Activated B cell treated with CpG ODN at 0.5 μM for 24 hours (primary cell): ENCODE measurements at regions of chr15 and their contacts with region 1.

Region 1: DNA sequence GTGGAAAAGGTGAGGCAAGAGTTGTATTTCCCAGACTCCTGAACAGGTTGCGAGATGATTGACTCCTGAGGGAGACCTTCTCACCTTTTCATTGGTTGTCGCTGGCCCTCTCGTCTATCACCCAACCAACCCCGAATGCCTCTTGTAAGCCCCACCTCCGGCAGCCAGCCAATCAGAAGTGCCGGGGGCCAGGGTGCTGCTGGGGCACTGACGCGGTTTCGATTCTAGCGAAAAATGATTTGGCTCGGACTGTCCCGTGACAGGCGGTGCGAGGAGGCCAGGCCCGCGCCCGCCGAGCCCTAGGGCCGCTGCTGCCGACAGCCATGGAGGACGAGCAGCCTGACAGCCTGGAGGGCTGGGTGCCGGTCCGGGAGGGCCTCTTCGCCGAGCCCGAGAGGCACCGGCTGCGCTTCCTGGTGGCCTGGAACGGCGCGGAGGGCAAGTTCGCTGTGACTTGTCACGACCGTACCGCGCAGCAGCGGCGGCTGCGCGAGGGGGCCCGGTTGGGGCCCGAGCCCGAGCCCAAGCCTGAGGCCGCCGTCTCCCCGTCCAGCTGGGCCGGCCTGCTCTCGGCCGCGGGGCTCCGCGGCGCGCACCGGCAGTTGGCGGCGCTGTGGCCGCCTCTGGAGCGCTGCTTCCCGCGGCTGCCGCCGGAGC is at the start of gene WHAMM:
- DNase-seq: peak; percentile 91
- ATAC-seq: peak; percentile 87
- H3K4me3 Mint-ChIP-seq: peak within 1 kb of the TSS; percentile 91
- H3K27ac Mint-ChIP-seq: peak within 1 kb of the TSS; percentile 93
- H3K4me1 Mint-ChIP-seq: peaks cover 71% of the 10 kb centered on the region
- H3K27me3 Mint-ChIP-seq: no peaks in the 10 kb centered on the region
- CTCF ChIP-seq: no peak
- total RNA-seq, gene WHAMM: 17.7 and 18.7 TPM in 2 replicates

Region 2: GRCh38 chr15:81216422-81216821 is 1593.1 kb before region 1 on chr15:
- CTCF ChIA-PET with region 1: no interaction called
- POLR2A ChIA-PET with region 1: no interaction called
- intact Hi-C with region 1: no loop called
- DNase-seq: no peak
- ATAC-seq: no peak
- H3K4me3 Mint-ChIP-seq: no peak overlapping the region
- H3K27ac Mint-ChIP-seq: no peak overlapping the region
- H3K4me1 Mint-ChIP-seq: no peaks in the 10 kb centered on the region
- H3K27me3 Mint-ChIP-seq: peaks cover 25% of the 10 kb centered on the region
- CTCF ChIP-seq: no peak

Region 3: DNA sequence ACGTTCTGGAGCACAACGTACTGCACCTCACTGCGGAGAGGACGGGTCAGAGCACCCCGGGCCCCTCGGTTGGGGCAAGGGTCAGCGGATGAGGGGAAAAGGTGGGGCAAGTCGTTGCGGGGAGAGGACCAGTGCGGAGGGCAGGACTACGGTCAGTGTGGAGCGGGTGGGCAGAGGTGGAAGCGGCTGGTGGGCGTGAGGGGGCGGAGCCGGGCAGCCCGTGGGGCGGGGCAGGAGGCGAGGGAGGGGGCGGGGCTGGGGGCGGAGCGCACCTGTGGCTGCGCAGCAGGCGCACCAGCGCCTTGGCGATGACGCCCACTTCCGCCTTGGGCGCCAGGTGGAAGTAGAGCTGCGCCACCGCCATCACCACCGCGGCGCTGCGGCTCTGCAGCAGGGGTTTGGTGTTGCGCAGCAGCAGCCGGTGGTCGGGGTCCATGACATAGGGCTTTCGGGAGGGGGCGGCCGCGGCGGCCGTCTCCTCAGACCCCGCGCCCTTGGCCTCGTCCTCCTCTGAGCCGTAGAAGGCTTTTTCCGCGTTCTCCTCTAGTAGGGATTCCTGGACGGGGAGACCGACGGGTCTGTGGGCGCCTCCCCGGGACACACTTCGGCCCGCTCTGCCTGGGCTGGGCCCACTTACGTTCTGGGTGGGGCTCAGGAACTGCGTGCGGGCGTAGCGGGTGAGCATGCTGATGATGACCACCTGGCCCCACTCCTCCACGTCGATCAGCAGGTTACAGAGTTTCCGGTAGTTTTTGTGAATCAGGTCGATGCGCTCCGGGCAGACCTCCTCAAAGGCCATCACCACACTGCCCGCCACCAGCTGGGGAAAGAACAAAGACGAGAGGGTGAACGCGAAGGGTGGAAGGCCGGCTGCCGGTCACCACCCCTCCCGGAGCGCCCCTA is 129.1 kb before region 1 on chr15:
- CTCF ChIA-PET with region 1: no interaction called
- POLR2A ChIA-PET with region 1: no interaction called
- intact Hi-C with region 1: loop called (anchors 1 kb)
- DNase-seq: peak; percentile 59
- ATAC-seq: peak; percentile 93
- H3K4me3 Mint-ChIP-seq: peak overlapping the region; percentile 87
- H3K27ac Mint-ChIP-seq: peak overlapping the region; percentile 82
- H3K4me1 Mint-ChIP-seq: peaks cover 12% of the 10 kb centered on the region
- H3K27me3 Mint-ChIP-seq: peaks cover 11% of the 10 kb centered on the region
- CTCF ChIP-seq: no peak

Region 4: GRCh38 chr15:82749951-82750830 is 59.3 kb before region 1 on chr15:
- CTCF ChIA-PET with region 1: interaction called, 7 read pairs
- POLR2A ChIA-PET with region 1: interaction called, 36 read pairs
- intact Hi-C with region 1: loop called (anchors 1 kb)
- DNase-seq: peak; percentile 76
- ATAC-seq: peak; percentile 95
- H3K4me3 Mint-ChIP-seq: peak overlapping the region; percentile 100
- H3K27ac Mint-ChIP-seq: peak overlapping the region; percentile 94
- H3K4me1 Mint-ChIP-seq: peaks cover 44% of the 10 kb centered on the region
- H3K27me3 Mint-ChIP-seq: no peaks in the 10 kb centered on the region
- CTCF ChIP-seq: no peak

Region 5: DNA sequence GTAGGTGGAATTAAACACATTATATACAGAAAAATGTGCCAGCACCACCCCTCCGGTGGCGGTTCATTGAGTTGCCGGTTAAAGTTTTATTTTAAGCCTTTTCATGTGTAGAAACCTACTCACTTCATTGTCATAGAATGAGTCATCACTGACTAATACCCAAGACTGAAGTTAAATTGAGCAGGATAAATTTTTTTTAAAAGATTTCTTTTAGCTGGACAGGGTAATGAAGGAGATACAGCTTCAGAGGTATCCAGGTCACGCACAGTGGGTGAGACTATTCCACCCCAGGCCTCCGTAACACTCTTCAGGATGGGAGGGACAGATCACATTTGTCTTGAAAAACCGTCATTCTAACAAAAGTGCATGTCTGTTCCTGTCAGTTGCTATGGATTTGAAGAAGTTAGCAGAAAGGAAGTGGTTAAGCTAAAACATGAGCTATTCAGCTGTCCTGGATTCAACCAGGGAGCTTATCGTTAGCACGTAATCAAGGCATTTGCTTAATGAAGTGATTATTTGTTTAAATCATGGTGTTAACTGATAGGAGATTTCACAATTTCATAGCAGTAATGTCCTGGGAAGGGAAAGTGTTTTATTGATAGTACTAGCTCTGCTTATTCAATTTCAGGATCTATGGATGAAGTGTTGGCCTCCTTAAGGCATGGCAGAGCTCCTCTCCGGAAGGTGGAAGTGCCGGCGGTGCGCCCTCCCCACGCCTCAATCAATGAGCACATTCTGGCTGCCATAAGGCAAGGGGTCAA is 23.2 kb after region 1 on chr15:
- CTCF ChIA-PET with region 1: interaction called, 3 read pairs
- POLR2A ChIA-PET with region 1: interaction called, 12 read pairs
- intact Hi-C with region 1: loop called (anchors 1 kb)
- DNase-seq: no peak
- ATAC-seq: peak; percentile 79
- H3K4me3 Mint-ChIP-seq: peak overlapping the region; percentile 51
- H3K27ac Mint-ChIP-seq: peak overlapping the region; percentile 86
- H3K4me1 Mint-ChIP-seq: peaks cover 20% of the 10 kb centered on the region
- H3K27me3 Mint-ChIP-seq: no peaks in the 10 kb centered on the region
- CTCF ChIP-seq: no peak

Region 6: GRCh38 chr15:82855286-82856100 is 46.0 kb after region 1 on chr15:
- CTCF ChIA-PET with region 1: no interaction called
- POLR2A ChIA-PET with region 1: interaction called, 13 read pairs
- intact Hi-C with region 1: no loop called
- DNase-seq: no peak
- ATAC-seq: no peak
- H3K4me3 Mint-ChIP-seq: peak overlapping the region; percentile 7
- H3K27ac Mint-ChIP-seq: no peak overlapping the region
- H3K4me1 Mint-ChIP-seq: peaks cover 13% of the 10 kb centered on the region
- H3K27me3 Mint-ChIP-seq: no peaks in the 10 kb centered on the region
- CTCF ChIP-seq: no peak